HEK293T (cell line): ENCODE measurements at regions of chrX and their contacts with region 1.

Region 1: GRCh38 chrX:47540754-47541538 is 20.1 kb upstream of the ARAF start:
- DNase-seq: peak; percentile 90

Region 2: GRCh38 chrX:47556045-47556623 is 15.2 kb after region 1 on chrX:
- CTCF ChIA-PET with region 1: interaction called, 3 read pairs
- POLR2A ChIA-PET with region 1: interaction called, 17 read pairs
- DNase-seq: peak; percentile 79

Region 3: GRCh38 chrX:47614618-47615017 is 73.7 kb after region 1 on chrX:
- CTCF ChIA-PET with region 1: no interaction called
- POLR2A ChIA-PET with region 1: no interaction called
- DNase-seq: no peak